ENCODE measurements at regions of chr3 and their contacts with region 1.

Region 1: GRCh38 chr3:104564045-104564643 is 802.6 kb upstream of the ALCAM start:
- DNase-seq: peak; percentile 24
- H3K4me3 Mint-ChIP-seq: no peak overlapping the region
- H3K27ac Mint-ChIP-seq: no peak overlapping the region
- H3K4me1 Mint-ChIP-seq: no peaks in the 10 kb centered on the region
- H3K27me3 Mint-ChIP-seq: no peaks in the 10 kb centered on the region

Region 2: DNA sequence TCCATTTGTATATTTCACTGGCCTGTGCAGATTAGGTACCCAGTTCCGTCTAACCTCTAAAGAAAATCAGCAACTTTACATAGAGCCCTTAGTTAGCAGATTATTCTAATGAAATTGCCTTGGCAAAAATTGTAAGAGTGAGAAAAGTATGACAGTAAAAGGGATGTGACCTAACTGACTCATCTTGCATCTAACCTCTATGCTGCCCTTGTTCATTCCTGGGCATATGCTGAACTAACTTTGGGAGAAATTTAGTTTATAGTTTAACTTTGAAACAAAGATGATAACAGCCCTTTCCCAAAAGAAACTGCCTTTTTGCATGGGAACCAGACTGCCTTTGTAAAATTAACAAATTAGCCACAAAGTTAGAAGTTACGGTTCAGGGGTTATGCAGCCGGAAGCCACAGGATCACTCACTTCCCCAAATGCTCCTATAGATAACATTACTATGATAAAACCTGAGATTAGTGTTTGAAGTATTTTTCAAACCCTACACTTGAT is 37.2 kb before region 1 on chr3:
- intact Hi-C with region 1: no loop called
- DNase-seq: no peak
- H3K4me3 Mint-ChIP-seq: no peak overlapping the region
- H3K27ac Mint-ChIP-seq: no peak overlapping the region
- H3K4me1 Mint-ChIP-seq: no peaks in the 10 kb centered on the region
- H3K27me3 Mint-ChIP-seq: no peaks in the 10 kb centered on the region

Region 3: GRCh38 chr3:105656651-105657504 is 1092.7 kb after region 1 on chr3:
- intact Hi-C with region 1: loop called (anchors 10 kb)
- DNase-seq: no peak
- H3K4me3 Mint-ChIP-seq: no peak overlapping the region
- H3K27ac Mint-ChIP-seq: no peak overlapping the region
- H3K4me1 Mint-ChIP-seq: no peaks in the 10 kb centered on the region
- H3K27me3 Mint-ChIP-seq: no peaks in the 10 kb centered on the region